Naive thymus-derived CD4-positive, alpha-beta T cell (primary cell): ENCODE measurements at regions of chr9 and their contacts with region 1.

Region 1: GRCh38 chr9:97900738-97901565 is 21.3 kb downstream of the TRMO start:
- DNase-seq: peak in 4 of 9 donors; percentile 27 to 43 (median 40)
- ATAC-seq: peak; percentile 36
- H3K4me3 ChIP-seq: no peak overlapping the region
- H3K4me3 Mint-ChIP-seq: peak overlapping the region in 8 of 10 donors; percentile 3 to 74 (median 32)
- H3K27ac ChIP-seq: peak overlapping the region; percentile 52
- H3K27ac Mint-ChIP-seq: peak overlapping the region in 8 of 9 donors; percentile 81 to 99 (median 94)
- H3K4me1 ChIP-seq: peaks cover 45 to 55% of the 10 kb centered on the region in 2 donors
- H3K4me1 Mint-ChIP-seq: peaks cover 39 to 73% (median 69%) of the 10 kb centered on the region in 7 donors
- H3K27me3 ChIP-seq: no peaks in the 10 kb centered on the region
- H3K27me3 Mint-ChIP-seq: no peaks in the 10 kb centered on the region

Region 2: DNA sequence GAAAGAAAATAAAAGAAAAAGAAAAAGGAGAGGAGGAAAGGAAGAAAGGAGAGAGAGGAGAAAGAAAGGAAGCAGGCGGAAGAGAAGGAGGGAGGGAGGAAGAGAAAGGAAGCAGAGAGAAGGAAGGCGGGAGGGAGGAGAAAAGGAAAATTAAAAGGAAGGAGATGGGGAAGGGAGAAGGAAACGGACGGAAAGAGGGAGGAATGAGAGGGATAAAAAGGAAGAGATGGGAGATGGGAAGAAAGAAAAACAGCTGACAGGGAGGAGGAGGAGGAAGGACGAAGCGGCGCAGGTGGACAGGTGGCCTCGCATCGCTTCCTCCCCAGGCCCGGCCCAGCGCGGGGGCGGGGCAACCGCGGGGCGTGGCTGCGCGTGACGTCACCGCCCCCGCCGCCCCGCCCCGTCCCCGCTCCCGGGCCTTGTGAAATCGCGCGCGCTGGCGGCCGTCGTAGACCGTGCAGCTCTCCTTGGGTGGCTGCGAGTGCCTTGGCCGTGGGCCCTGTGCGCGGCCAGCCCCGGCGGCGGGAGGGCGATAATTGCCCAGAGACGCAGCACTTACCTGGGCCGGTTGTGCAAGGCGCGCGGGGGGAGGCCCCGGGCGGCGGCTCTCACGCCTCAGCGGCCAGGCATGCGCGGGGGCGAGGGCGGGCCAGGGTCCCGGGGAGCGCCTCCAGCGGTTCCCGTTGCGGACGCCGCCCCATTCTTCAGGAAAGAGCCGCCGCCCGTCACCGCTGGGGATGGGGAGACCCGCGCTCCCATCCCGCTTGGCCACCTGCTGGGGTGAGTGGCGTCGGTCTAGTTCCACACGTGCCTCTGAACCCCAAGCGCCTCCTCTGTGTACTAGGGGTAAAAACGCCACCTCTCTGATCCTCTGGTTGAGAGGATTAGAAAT is 97.5 kb before region 1 on chr9:
- CTCF ChIA-PET with region 1: no interaction called
- POLR2A ChIA-PET with region 1: no interaction called
- intact Hi-C with region 1: loop called (anchors 2 to 5 kb)
- DNase-seq: peak; percentile 59 to 77 (median 75)
- ATAC-seq: peak; percentile 98
- H3K4me3 ChIP-seq: peak overlapping the region; percentile 72
- H3K4me3 Mint-ChIP-seq: peak overlapping the region; percentile 78 to 92 (median 87)
- H3K27ac ChIP-seq: peak overlapping the region; percentile 45
- H3K27ac Mint-ChIP-seq: peak overlapping the region in 7 of 9 donors; percentile 28 to 86 (median 80)
- H3K4me1 ChIP-seq: no peaks in the 10 kb centered on the region
- H3K4me1 Mint-ChIP-seq: peaks cover 0 to 13% (median 9%) of the 10 kb centered on the region in 7 donors
- H3K27me3 ChIP-seq: no peaks in the 10 kb centered on the region
- H3K27me3 Mint-ChIP-seq: peaks cover 4 to 51% (median 17%) of the 10 kb centered on the region in 5 donors

Region 3: DNA sequence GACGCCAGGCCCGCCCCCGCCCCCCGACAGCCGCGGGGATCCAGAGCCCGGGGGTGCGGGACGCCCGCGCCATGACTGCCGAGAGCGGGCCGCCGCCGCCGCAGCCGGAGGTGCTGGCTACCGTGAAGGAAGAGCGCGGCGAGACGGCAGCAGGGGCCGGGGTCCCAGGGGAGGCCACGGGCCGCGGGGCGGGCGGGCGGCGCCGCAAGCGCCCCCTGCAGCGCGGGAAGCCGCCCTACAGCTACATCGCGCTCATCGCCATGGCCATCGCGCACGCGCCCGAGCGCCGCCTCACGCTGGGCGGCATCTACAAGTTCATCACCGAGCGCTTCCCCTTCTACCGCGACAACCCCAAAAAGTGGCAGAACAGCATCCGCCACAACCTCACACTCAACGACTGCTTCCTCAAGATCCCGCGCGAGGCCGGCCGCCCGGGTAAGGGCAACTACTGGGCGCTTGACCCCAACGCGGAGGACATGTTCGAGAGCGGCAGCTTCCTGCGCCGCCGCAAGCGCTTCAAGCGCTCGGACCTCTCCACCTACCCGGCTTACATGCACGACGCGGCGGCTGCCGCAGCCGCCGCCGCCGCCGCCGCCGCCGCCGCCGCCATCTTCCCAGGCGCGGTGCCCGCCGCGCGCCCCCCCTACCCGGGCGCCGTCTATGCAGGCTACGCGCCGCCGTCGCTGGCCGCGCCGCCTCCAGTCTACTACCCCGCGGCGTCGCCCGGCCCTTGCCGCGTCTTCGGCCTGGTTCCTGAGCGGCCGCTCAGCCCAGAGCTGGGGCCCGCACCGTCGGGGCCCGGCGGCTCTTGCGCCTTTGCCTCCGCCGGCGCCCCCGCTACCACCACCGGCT is 46.9 kb before region 1 on chr9:
- CTCF ChIA-PET with region 1: no interaction called
- POLR2A ChIA-PET with region 1: no interaction called
- intact Hi-C with region 1: loop called in 1 of 2 experiments (anchors 5 kb)
- DNase-seq: peak; percentile 47 to 72 (median 59)
- ATAC-seq: peak; percentile 87
- H3K4me3 ChIP-seq: peak overlapping the region; percentile 51
- H3K4me3 Mint-ChIP-seq: peak overlapping the region; percentile 85 to 93 (median 90)
- H3K27ac ChIP-seq: no peak overlapping the region
- H3K27ac Mint-ChIP-seq: peak overlapping the region in 6 of 9 donors; percentile 1 to 91 (median 73)
- H3K4me1 ChIP-seq: peaks cover 5 to 18% of the 10 kb centered on the region in 2 donors
- H3K4me1 Mint-ChIP-seq: peaks cover 9 to 39% (median 21%) of the 10 kb centered on the region in 7 donors
- H3K27me3 ChIP-seq: peaks cover 12 to 54% of the 10 kb centered on the region in 2 donors
- H3K27me3 Mint-ChIP-seq: peaks cover 62 to 86% (median 71%) of the 10 kb centered on the region in 5 donors

Region 4: DNA sequence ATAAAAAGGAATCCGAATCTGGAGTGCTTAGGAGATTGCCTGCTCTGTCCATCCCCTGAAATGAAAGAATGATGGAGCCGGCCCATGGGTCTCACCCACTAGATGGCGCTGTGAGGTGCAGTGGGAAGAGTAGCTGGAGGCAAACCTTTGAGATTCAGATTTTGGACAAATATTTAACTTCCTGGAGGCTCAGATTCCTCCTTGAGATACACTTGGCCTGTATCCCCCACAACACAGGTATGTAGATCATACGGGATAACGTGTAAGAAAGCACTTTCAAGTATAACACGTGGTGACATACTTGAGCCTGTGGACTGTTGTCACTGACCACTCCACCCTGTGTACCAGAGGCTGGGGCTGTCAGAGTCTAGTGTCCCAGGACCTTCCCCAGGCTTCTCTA is 10.9 kb before region 1 on chr9:
- CTCF ChIA-PET with region 1: interaction called, 131 read pairs
- POLR2A ChIA-PET with region 1: interaction called, 24 read pairs
- intact Hi-C with region 1: loop called in 1 of 2 experiments (anchors 1 kb)
- DNase-seq: peak; percentile 40 to 73 (median 57)
- ATAC-seq: peak; percentile 88
- H3K4me3 ChIP-seq: no peak overlapping the region
- H3K4me3 Mint-ChIP-seq: peak overlapping the region in 1 of 10 donors; percentile 51
- H3K27ac ChIP-seq: no peak overlapping the region
- H3K27ac Mint-ChIP-seq: peak overlapping the region in 5 of 9 donors; percentile 28 to 81 (median 68)
- H3K4me1 ChIP-seq: peaks cover 0 to 4% of the 10 kb centered on the region in 2 donors
- H3K4me1 Mint-ChIP-seq: peaks cover 6 to 23% (median 18%) of the 10 kb centered on the region in 7 donors
- H3K27me3 ChIP-seq: no peaks in the 10 kb centered on the region
- H3K27me3 Mint-ChIP-seq: no peaks in the 10 kb centered on the region